ENCODE measurements at regions of chr4 and their contacts with region 1.

Region 1: GRCh38 chr4:73662709-73663546 is 42.7 kb upstream of the RASSF6 start:
- DNase-seq: peak; percentile 76
- H3K4me3 ChIP-seq: no peak overlapping the region
- H3K27ac ChIP-seq: peak overlapping the region; percentile 94
- H3K4me1 ChIP-seq: peaks cover 28% of the 10 kb centered on the region
- H3K27me3 ChIP-seq: no peaks in the 10 kb centered on the region
- CTCF ChIP-seq: peak; percentile 25 to 44
- POLR2A ChIP-seq: no peak

Region 2: GRCh38 chr4:73721435-73721834 is 58.5 kb after region 1 on chr4:
- CTCF ChIA-PET with region 1: interaction called, 19 read pairs
- POLR2A ChIA-PET with region 1: no interaction called
- dilution Hi-C with region 1: no loop called
- intact Hi-C with region 1: no loop called
- DNase-seq: no peak
- H3K4me3 ChIP-seq: no peak overlapping the region
- H3K27ac ChIP-seq: no peak overlapping the region
- H3K4me1 ChIP-seq: peaks cover 19% of the 10 kb centered on the region
- H3K27me3 ChIP-seq: no peaks in the 10 kb centered on the region
- CTCF ChIP-seq: no peak
- POLR2A ChIP-seq: no peak

Region 3: GRCh38 chr4:73803213-73803612 is 140.3 kb after region 1 on chr4:
- CTCF ChIA-PET with region 1: interaction called, 11 read pairs
- POLR2A ChIA-PET with region 1: no interaction called
- dilution Hi-C with region 1: no loop called
- intact Hi-C with region 1: no loop called
- DNase-seq: no peak
- H3K4me3 ChIP-seq: no peak overlapping the region
- H3K27ac ChIP-seq: no peak overlapping the region
- H3K4me1 ChIP-seq: no peaks in the 10 kb centered on the region
- H3K27me3 ChIP-seq: no peaks in the 10 kb centered on the region
- CTCF ChIP-seq: no peak
- POLR2A ChIP-seq: no peak

Region 4: GRCh38 chr4:73922766-73923630 is 260.1 kb after region 1 on chr4:
- CTCF ChIA-PET with region 1: interaction called, 54 read pairs
- POLR2A ChIA-PET with region 1: no interaction called
- dilution Hi-C with region 1: no loop called
- intact Hi-C with region 1: loop called (anchors 1 kb)
- DNase-seq: peak; percentile 76
- H3K4me3 ChIP-seq: no peak overlapping the region
- H3K27ac ChIP-seq: no peak overlapping the region
- H3K4me1 ChIP-seq: peaks cover 10% of the 10 kb centered on the region
- H3K27me3 ChIP-seq: no peaks in the 10 kb centered on the region
- CTCF ChIP-seq: peak; percentile 9 to 14
- POLR2A ChIP-seq: no peak

Region 5: GRCh38 chr4:73978886-73979285 is 316.0 kb after region 1 on chr4:
- CTCF ChIA-PET with region 1: no interaction called
- POLR2A ChIA-PET with region 1: no interaction called
- dilution Hi-C with region 1: no loop called
- intact Hi-C with region 1: no loop called
- DNase-seq: no peak
- H3K4me3 ChIP-seq: no peak overlapping the region
- H3K27ac ChIP-seq: no peak overlapping the region
- H3K4me1 ChIP-seq: no peaks in the 10 kb centered on the region
- H3K27me3 ChIP-seq: no peaks in the 10 kb centered on the region
- CTCF ChIP-seq: no peak
- POLR2A ChIP-seq: no peak

Region 6: DNA sequence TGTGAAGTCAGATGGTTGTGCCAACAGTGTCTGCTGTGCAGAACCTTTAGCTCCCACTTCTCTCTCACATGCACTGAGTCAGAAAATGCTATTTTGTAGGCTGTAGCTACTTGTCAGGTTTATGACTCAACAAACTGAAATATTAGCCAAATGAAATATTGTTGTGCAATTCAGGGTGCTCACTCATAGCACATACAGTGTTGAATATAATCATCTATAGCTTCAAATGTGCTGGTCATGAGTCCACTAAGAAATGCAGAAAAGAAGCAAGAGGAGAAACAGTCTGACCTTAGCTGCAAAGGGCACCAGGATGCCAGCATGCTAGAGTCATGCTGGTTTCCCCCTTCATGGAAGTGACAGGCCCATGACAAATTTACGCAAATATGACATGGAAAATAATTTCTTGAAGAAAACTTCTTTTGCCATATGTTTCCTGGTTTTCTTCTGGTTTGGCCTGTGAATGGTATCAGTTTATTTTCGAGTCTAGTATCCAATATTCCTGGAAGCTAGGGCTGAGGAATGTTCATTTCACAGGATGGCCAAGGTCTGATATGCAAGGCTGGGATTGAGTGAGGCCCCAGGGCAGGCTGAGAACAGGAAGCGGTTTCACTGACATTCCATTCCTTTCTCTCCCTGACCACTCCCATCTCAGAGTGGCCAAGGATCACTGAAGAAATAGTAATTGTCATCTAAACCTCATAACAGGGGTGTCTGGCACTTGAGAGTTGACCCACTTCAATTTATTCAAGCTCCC is 446.4 kb after region 1 on chr4:
- CTCF ChIA-PET with region 1: interaction called, 3 read pairs
- POLR2A ChIA-PET with region 1: no interaction called
- dilution Hi-C with region 1: no loop called
- intact Hi-C with region 1: loop called (anchors 1 kb)
- DNase-seq: peak; percentile 93
- H3K4me3 ChIP-seq: no peak overlapping the region
- H3K27ac ChIP-seq: peak overlapping the region; percentile 92
- H3K4me1 ChIP-seq: peaks cover 44% of the 10 kb centered on the region
- H3K27me3 ChIP-seq: no peaks in the 10 kb centered on the region
- CTCF ChIP-seq: no peak
- POLR2A ChIP-seq: peak; percentile 59

Measured in endothelial cell of umbilical vein (primary cell).